Uterus (tissue), 4 donors: ENCODE measurements at regions of chr9 and their contacts with region 1.

Region 1: DNA sequence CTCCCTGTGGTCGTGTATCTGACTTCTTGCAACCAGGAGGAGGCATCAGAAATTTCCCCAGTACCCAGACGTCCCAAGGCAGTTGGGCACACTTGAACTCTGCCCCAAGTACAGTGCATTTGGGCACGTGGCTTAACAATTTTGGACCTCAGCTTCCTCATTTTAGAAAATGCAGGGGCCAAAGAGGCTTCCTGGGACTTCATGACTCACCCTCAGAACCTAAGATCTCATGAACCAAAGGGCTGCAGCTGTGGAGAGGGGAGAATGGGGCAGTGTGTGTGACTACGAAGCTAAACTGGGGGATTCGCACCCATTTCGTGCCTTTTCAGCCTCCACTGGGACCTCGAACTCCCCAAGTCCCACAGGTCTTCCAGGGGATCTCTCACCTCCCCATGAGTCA is 59.2 kb downstream of the SYK start:
- DNase-seq: no peak
- H3K4me3 ChIP-seq: no peak overlapping the region
- H3K27ac ChIP-seq: no peak overlapping the region
- H3K4me1 ChIP-seq: no peaks in the 10 kb centered on the region
- H3K27me3 ChIP-seq: no peaks in the 10 kb centered on the region
- CTCF ChIP-seq: no peak
- POLR2A ChIP-seq: no peak

Region 2: GRCh38 chr9:89576404-89576839 is 1284.4 kb before region 1 on chr9:
- intact Hi-C with region 1: loop called (anchors 10 kb)
- DNase-seq: no peak
- H3K4me3 ChIP-seq: no peak overlapping the region
- H3K27ac ChIP-seq: no peak overlapping the region
- H3K4me1 ChIP-seq: no peaks in the 10 kb centered on the region
- H3K27me3 ChIP-seq: no peaks in the 10 kb centered on the region
- CTCF ChIP-seq: peak; percentile 64 to 72 (median 68)
- POLR2A ChIP-seq: no peak